HCT116 (cell line): ENCODE measurements at regions of chr4 and their contacts with region 1.

Region 1: DNA sequence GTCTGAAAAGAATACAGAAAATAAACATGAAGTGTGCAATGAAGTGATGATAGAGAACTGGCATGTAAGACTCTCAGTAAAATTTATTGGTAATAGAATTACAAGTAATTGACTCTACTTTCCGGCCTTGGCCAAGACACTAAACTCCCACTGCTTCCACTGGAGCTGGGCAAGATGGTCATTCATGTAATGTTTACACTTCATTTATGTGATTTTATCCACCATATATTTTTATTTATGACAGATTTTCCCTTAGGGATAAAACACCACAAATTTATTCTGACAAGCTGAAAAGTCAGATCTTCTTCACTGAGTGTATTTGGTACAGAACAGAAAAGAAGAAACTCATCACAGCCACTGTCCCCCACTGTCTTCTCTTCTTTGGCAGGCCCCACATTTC is 191.9 kb downstream of the SLC39A8 start:
- DNase-seq: no peak
- ATAC-seq: no peak
- H3K4me3 ChIP-seq: no peak overlapping the region
- H3K27ac ChIP-seq: no peak overlapping the region
- H3K4me1 ChIP-seq: no peaks in the 10 kb centered on the region
- H3K27me3 ChIP-seq: no peaks in the 10 kb centered on the region
- CTCF ChIP-seq: no peak
- POLR2A ChIP-seq: no peak
- RAD21 ChIP-seq: no peak

Region 2: DNA sequence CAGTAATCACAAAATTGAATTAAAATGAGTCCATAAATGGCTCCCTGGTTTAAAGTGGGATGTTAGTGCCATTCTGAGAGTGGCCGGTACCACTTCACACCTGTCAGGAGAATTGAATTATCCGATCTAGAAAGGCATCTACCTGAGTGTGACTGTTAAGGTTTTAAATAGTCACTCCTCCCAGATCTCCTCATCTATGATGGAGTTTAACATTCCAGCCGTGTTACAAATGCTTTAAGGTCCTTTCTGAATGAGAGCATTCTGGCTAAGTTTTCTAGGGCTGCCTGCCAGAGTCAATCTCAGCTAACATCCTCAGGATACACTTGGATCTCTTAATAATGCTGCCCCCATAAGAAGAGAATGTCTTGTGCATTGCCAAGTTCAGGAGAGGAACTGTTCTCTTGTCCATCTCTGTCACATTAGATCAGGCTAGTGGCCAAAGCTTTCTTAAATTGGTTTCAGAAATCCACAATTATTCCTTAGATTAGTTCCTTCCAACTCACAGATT is 39.2 kb before region 1 on chr4:
- CTCF ChIA-PET with region 1: no interaction called
- POLR2A ChIA-PET with region 1: no interaction called
- RAD21 ChIA-PET with region 1: no interaction called
- intact Hi-C with region 1: no loop called
- DNase-seq: no peak
- ATAC-seq: no peak
- H3K4me3 ChIP-seq: no peak overlapping the region
- H3K27ac ChIP-seq: no peak overlapping the region
- H3K4me1 ChIP-seq: no peaks in the 10 kb centered on the region
- H3K27me3 ChIP-seq: no peaks in the 10 kb centered on the region
- CTCF ChIP-seq: no peak
- POLR2A ChIP-seq: no peak
- RAD21 ChIP-seq: no peak

Region 3: DNA sequence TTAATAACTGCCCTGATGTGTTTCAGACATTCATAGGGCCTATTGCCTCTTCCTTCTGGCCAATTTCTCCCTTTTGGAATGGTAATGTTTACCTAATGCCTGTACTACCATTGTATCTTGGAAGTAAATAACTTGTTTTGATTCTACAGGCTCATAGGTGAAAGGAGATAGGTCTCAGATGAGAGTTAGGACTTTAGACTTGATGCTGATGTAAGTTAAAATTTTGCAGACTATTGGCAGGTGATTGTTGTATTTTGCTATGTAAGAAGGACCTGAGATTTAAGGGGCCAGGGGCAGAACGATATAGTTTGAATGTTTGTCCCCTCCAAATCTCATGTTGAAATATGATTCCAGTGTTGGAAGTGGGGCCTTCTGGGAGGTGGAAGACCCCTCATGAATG is 23.6 kb before region 1 on chr4:
- CTCF ChIA-PET with region 1: no interaction called
- POLR2A ChIA-PET with region 1: no interaction called
- RAD21 ChIA-PET with region 1: no interaction called
- intact Hi-C with region 1: loop called (anchors 2 kb)
- DNase-seq: no peak
- ATAC-seq: no peak
- H3K4me3 ChIP-seq: no peak overlapping the region
- H3K27ac ChIP-seq: no peak overlapping the region
- H3K4me1 ChIP-seq: no peaks in the 10 kb centered on the region
- H3K27me3 ChIP-seq: no peaks in the 10 kb centered on the region
- CTCF ChIP-seq: no peak
- POLR2A ChIP-seq: no peak
- RAD21 ChIP-seq: no peak

Region 4: DNA sequence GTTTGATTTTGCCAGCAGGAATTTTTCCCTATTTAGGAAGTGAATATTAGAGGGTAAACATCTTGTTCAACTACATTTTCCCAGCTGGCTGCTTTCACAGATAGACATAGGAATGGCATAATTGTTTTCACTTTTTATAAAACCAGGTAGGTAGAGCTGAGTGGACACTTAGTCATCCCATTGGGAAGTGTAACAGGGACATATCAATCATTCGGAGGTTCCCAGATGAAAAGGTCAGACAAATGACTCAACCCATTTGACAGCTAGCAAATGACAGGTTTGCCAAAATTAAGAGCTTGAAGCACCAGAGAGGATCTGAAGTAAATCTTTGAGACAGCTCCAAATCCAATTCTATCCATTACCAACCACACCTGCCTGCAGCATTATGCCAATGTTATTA is 13.5 kb before region 1 on chr4:
- CTCF ChIA-PET with region 1: no interaction called
- POLR2A ChIA-PET with region 1: no interaction called
- RAD21 ChIA-PET with region 1: no interaction called
- intact Hi-C with region 1: no loop called
- DNase-seq: peak; percentile 36
- ATAC-seq: peak; percentile 57
- H3K4me3 ChIP-seq: no peak overlapping the region
- H3K27ac ChIP-seq: no peak overlapping the region
- H3K4me1 ChIP-seq: peaks cover 0 to 15% of the 10 kb centered on the region in 2 experiments; a peak in 2 of 4 replicates
- H3K27me3 ChIP-seq: no peaks in the 10 kb centered on the region
- CTCF ChIP-seq: no peak
- POLR2A ChIP-seq: no peak
- RAD21 ChIP-seq: 0 out of 2 replicates have a peak, but pooled peaks have one; percentile 2